ENCODE measurements at regions of chr16 and their contacts with region 1.

Region 1: DNA sequence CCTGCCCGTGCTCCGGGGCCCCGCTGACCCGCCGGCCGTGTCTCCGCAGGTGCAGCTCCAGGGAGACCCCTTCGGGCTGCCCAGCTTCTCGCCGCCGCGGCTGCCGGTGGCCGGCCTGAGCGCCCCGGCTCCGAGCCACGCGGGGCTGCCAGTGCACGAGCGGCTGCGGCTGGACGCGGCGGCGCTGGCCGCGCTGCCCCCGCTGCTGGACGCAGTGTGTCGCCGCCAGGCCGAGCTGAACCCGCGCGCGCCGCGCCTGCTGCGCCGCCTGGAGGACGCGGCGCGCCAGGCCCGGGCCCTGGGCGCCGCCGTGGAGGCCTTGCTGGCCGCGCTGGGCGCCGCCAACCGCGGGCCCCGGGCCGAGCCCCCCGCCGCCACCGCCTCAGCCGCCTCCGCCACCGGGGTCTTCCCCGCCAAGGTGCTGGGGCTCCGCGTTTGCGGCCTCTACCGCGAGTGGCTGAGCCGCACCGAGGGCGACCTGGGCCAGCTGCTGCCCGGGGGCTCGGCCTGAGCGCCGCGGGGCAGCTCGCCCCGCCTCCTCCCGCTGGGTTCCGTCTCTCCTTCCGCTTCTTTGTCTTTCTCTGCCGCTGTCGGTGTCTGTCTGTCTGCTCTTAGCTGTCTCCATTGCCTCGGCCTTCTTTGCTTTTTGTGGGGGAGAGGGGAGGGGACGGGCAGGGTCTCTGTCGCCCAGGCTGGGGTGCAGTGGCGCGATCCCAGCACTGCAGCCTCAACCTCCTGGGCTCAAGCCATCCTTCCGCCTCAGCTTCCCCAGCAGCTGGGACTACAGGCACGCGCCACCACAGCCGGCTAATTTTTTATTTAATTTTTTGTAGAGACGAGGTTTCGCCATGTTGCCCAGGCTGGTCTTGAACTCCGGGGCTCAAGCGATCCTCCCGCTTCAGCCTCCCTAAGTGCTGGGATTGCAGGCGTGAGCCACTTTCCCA is 5.9 kb downstream of the CTF1 start:
- DNase-seq: peak; percentile 63
- ATAC-seq: peak; percentile 98
- H3K4me3 ChIP-seq: peak overlapping the region; percentile 39
- H3K27ac ChIP-seq: peak overlapping the region; percentile 42
- H3K4me1 ChIP-seq: peaks cover 4% of the 10 kb centered on the region; the same call in 1 of the 2 replicates
- H3K27me3 ChIP-seq: no peaks in the 10 kb centered on the region
- CTCF ChIP-seq: peak; percentile 70
- POLR2A ChIP-seq: no peak
- RAD21 ChIP-seq: peak; percentile 61

Region 2: GRCh38 chr16:30844671-30845449 is 57.4 kb before region 1 on chr16:
- CTCF ChIA-PET with region 1: interaction called, 9 read pairs
- POLR2A ChIA-PET with region 1: interaction called, 3 read pairs
- dilution Hi-C with region 1: no loop called
- in situ Hi-C with region 1: loop called (anchors 5 kb)
- intact Hi-C with region 1: loop called (anchors 1 kb)
- DNase-seq: peak; percentile 90
- ATAC-seq: peak; percentile 92
- H3K4me3 ChIP-seq: no peak overlapping the region
- H3K27ac ChIP-seq: no peak overlapping the region
- H3K4me1 ChIP-seq: peaks cover 5% of the 10 kb centered on the region; the same call in 1 of the 2 replicates
- H3K27me3 ChIP-seq: no peaks in the 10 kb centered on the region
- CTCF ChIP-seq: peak; percentile 94
- POLR2A ChIP-seq: no peak
- RAD21 ChIP-seq: peak; percentile 91

Region 3: DNA sequence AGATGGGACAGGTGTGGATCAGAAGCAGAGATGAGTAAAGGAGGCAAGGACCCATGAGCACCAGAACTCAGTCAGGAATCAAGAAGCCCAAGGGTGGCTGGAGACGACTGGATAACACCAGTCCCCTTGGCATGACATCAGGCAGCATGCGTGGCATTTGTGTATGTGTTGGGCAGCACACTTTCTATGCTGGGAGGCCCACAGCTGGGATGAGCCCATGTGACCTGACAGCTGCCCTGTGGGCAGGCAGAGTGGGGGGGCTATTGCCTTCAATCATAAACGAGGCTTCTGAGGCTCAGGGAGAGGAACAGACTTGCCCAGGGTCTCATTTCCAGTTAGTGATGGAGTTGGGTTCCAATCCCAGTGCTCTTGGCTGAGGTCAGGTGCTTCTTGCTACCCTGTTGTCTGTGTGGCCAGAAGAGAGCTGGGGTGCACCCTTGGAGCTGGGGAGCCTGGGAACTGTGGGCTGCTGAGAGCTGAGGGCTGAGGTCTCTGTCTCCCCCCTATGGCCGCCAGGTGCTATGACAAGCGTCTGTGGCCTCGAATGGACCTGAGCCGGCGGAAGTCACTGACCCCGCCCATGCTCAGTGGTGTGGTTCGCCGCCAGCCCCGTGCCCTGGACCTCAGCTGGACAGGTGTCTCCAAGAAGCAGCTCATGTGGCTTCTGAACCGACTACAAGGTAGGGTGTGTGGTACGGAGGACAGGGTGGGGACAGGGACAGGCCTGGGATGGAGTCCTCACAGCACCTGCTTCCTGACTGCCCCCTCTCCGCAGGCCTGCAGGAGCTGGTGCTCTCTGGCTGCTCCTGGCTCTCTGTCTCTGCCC is 39.5 kb after region 1 on chr16:
- CTCF ChIA-PET with region 1: interaction called, 11 read pairs
- POLR2A ChIA-PET with region 1: interaction called, 4 read pairs
- dilution Hi-C with region 1: no loop called
- in situ Hi-C with region 1: no loop called
- intact Hi-C with region 1: no loop called
- DNase-seq: peak; percentile 58
- ATAC-seq: peak; percentile 96
- H3K4me3 ChIP-seq: no peak overlapping the region
- H3K27ac ChIP-seq: no peak overlapping the region
- H3K4me1 ChIP-seq: peaks cover 6% of the 10 kb centered on the region
- H3K27me3 ChIP-seq: no peaks in the 10 kb centered on the region
- CTCF ChIP-seq: peak; percentile 80
- POLR2A ChIP-seq: no peak
- RAD21 ChIP-seq: peak; percentile 74